ENCODE measurements at regions of chr17 and their contacts with region 1.

Region 1: DNA sequence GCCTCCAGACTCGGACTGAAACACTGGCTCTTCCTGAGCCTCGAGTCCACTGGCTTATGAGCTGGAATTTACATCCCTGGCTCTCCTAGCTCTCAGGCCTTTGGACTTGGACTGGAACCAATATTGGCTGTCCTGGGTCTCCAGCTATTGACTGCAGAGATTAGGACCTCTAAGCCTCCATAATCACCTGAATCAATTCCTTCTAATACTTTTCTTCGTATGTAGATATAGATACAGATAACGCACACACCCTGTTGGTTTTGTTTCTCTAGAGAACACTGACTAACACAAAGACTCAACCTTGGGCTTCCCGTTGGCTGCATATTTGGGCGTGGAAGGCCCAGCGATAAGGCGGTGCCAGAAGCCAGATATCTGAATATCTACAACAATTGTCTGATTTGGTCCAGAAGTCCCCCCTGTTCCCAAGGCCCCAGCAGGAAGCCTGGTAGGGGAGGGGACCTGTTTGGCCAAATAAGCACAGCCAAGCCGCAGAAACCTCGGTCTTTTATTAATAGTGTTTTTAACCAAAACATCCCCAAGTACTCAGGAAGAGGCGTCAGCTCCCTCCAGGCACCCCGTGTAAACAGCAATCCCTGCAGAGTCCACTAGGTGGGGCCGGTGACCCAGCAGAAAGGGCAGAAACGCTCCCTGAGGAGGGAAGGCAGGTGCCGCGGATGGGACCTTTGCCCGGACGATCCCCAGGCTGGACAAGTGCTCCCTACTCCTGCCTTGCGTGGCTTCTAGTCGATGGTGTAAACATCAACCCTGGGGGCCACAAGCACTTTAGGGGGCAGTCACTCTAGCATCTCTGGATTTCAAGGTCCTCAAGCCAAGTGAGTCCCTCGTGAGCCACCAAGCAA is 57.0 kb downstream of the ABR start:
- DNase-seq: peak; percentile 80
- H3K27ac ChIP-seq: peak overlapping the region; percentile 8; the same call in 1 of the 2 replicates
- CTCF ChIP-seq: peak; percentile 92

Region 2: DNA sequence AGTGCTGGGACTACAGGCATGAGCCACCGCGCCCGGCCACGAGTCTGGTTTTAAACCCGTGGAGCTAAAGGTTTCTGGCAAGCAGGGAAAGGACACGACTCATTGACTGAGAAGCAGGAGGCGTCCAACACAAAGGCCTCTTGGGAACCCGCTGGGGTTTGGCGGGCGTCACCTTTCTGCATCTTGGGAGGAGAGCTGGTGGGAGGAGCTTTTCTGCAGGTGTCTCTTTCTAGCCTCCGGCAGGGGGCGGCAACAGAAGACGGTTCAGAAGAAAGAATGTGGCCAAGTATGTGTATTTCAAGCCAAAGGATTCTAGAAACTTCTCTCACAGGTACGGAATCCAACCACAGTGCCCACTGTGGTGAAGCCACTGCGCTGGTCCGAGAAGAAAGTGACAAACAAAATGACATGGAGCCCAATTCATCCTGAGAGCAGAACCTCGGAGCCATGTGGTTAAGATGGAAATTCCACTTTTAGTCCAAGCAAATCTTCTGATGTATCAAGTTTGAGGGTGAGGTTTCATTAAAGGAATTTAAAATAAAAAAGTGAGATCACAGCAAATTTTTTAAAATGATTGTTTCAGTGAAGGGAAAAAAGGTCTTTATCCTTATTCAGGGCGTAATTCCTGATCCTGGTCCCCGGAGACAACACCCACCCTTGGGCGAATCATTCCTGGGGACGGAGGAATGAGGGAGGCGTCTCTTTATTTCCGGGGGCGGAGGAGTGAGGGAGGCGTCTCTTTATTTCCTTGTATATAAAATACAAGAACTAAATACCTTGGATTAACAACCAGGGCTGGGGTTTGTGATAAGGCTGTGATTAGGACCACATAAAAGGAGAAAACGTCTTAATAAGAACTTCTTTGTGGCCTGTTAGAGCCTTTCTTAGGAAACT is 243.0 kb before region 1 on chr17:
- CTCF ChIA-PET with region 1: no interaction called
- POLR2A ChIA-PET with region 1: no interaction called
- DNase-seq: peak; percentile 88
- H3K27ac ChIP-seq: peak overlapping the region; percentile 86
- CTCF ChIP-seq: peak; percentile 75

Region 3: GRCh38 chr17:1067282-1067956 is 55.3 kb before region 1 on chr17:
- CTCF ChIA-PET with region 1: no interaction called
- POLR2A ChIA-PET with region 1: no interaction called
- DNase-seq: peak; percentile 97
- H3K27ac ChIP-seq: peak overlapping the region; percentile 81
- CTCF ChIP-seq: no peak

Region 4: DNA sequence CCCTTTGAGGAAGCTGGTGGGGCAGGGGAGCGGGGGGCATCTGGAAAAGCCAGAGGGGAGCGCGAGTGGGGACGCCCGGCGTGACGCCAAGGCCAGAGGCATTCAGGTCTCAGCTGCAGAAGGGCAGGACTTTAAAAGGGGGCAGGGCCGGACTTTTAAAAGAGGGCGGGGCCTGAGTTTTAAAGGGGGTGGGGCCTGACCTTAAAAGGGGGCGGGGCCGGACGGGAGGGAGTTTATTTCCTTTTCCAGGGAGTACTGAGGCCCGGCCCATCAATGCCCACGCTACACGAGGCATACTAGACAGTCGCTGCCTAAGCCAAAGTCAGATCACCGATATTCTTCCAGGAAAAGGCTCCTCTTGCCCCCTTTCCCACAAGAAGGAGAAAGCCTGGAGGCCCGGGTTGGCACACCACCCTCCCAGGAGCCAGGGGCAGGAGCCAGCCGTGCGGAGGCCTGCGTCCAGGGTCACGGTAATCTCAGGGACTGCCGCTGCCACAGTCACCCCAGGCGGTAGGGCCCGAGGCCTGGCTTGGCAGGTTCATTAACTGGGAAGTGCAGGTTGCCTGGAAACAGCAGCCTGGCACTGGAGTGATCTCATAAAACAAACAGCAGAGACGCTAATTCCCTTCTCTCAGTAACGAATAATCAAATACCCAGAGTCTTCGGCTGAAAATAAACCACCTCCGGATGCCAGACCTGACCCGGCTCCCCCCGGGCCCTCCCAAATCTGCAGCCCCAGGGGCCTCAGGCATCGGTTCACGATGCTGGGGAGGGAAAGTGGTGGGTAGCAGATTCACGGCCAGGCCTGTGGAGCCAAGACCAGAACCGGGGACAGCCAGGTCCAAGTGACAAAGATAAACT is 35.2 kb before region 1 on chr17:
- CTCF ChIA-PET with region 1: no interaction called
- POLR2A ChIA-PET with region 1: no interaction called
- DNase-seq: peak; percentile 78
- H3K27ac ChIP-seq: peak overlapping the region; percentile 95
- CTCF ChIP-seq: no peak

Region 5: GRCh38 chr17:1147661-1148060 is 24.9 kb after region 1 on chr17:
- CTCF ChIA-PET with region 1: interaction called, 16 read pairs
- POLR2A ChIA-PET with region 1: no interaction called
- DNase-seq: peak; percentile 64
- H3K27ac ChIP-seq: no peak overlapping the region
- CTCF ChIP-seq: peak; percentile 40

Region 6: GRCh38 chr17:1166276-1166675 is 43.5 kb after region 1 on chr17:
- CTCF ChIA-PET with region 1: interaction called, 10 read pairs
- POLR2A ChIA-PET with region 1: no interaction called
- DNase-seq: no peak
- H3K27ac ChIP-seq: no peak overlapping the region
- CTCF ChIP-seq: no peak

Region 7: GRCh38 chr17:1186923-1187771 is 64.4 kb after region 1 on chr17:
- CTCF ChIA-PET with region 1: interaction called, 42 read pairs
- POLR2A ChIA-PET with region 1: no interaction called
- DNase-seq: peak; percentile 78
- H3K27ac ChIP-seq: no peak overlapping the region
- CTCF ChIP-seq: peak; percentile 97

Region 8: DNA sequence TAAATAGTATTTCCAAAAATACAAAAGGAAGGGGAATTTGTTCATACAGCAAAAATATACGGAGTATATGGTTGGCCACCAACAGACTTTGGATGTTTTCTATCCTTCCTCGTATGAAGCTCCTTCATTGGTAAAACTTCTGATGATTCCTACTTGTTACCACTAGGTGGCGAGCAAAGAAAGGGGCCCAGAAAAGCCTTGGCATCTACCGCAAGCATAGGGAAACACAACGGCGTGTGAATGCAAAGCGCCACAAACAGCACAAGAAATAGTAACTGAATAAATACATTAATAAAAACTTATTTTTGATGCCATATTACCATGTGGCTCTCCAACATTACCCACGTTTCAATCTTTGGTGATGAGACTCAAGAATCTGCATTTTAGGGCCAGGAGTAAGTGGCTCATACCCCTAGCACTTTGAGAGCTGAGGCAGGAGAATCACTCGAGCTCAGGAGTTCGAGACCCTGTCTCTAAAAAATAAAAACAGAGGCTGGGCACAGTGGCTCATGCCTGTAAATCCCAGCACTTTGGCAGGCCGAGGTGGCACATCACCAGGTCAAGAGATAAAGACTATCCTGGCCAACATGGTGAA is 242.8 kb after region 1 on chr17:
- CTCF ChIA-PET with region 1: no interaction called
- POLR2A ChIA-PET with region 1: no interaction called
- DNase-seq: peak; percentile 59
- H3K27ac ChIP-seq: peak overlapping the region; percentile 77
- CTCF ChIP-seq: peak; percentile 90